PC-9 (cell line): ENCODE measurements at regions of chr1 and their contacts with region 1.

Region 1: GRCh38 chr1:224113918-224114786 is at the start of gene FBXO28:
- DNase-seq: peak; percentile 86 to 93
- H3K4me3 ChIP-seq: peak within 1 kb of the TSS; percentile 81
- H3K27ac ChIP-seq: peak within 1 kb of the TSS; percentile 45
- H3K4me1 ChIP-seq: peaks cover 24% of the 10 kb centered on the region
- H3K27me3 ChIP-seq: no peaks in the 10 kb centered on the region
- CTCF ChIP-seq: no peak
- total RNA-seq, gene FBXO28: 43.4 and 48.1 TPM in 2 replicates

Region 2: DNA sequence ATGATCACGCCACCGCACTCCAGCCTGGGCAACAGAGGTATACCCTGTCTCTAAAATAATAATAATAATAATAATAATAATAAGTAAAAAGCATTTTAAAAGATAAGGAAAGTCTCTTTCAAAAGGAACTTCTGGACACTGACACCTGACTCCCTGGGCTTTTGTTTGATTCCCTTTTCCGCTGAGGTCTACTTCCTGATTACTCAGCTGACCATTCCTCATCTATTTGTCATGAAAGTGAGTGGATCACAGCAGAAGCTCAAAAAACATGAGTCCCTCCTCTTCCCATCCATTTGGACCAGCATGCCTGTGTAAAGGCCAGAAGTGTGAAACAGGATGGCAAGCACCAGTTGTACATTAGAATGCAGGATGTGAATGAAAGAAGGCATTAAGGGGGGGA is 61.4 kb before region 1 on chr1:
- CTCF ChIA-PET with region 1: interaction called, 5 read pairs
- POLR2A ChIA-PET with region 1: no interaction called
- intact Hi-C with region 1: loop called (anchors 2 kb)
- DNase-seq: peak in 1 of 2 experiments; percentile 76
- H3K4me3 ChIP-seq: no peak overlapping the region
- H3K27ac ChIP-seq: peak overlapping the region; percentile 42
- H3K4me1 ChIP-seq: peaks cover 33% of the 10 kb centered on the region
- H3K27me3 ChIP-seq: no peaks in the 10 kb centered on the region
- CTCF ChIP-seq: no peak

Region 3: GRCh38 chr1:224149713-224150112 is 35.6 kb after region 1 on chr1:
- CTCF ChIA-PET with region 1: interaction called, 14 read pairs
- POLR2A ChIA-PET with region 1: no interaction called
- intact Hi-C with region 1: no loop called
- DNase-seq: no peak
- H3K4me3 ChIP-seq: no peak overlapping the region
- H3K27ac ChIP-seq: no peak overlapping the region
- H3K4me1 ChIP-seq: peaks cover 7% of the 10 kb centered on the region
- H3K27me3 ChIP-seq: no peaks in the 10 kb centered on the region
- CTCF ChIP-seq: no peak

Region 4: GRCh38 chr1:224329842-224330753 is 215.9 kb after region 1 on chr1 and contains the start of gene NVL:
- CTCF ChIA-PET with region 1: no interaction called
- POLR2A ChIA-PET with region 1: no interaction called
- intact Hi-C with region 1: loop called (anchors 1 kb)
- DNase-seq: peak; percentile 84 to 91
- H3K4me3 ChIP-seq: peak within 1 kb of the TSS; percentile 87
- H3K27ac ChIP-seq: peak within 1 kb of the TSS; percentile 78
- H3K4me1 ChIP-seq: peaks cover 16% of the 10 kb centered on the region
- H3K27me3 ChIP-seq: no peaks in the 10 kb centered on the region
- CTCF ChIP-seq: no peak
- total RNA-seq, gene NVL: 27.3 and 36.1 TPM in 2 replicates